ENCODE measurements at regions of chr6 and their contacts with region 1.

Region 1: GRCh38 chr6:16770701-16771569 is 9.7 kb upstream of the ATXN1 start:
- DNase-seq: peak; percentile 65 to 90 (median 73)
- ATAC-seq: peak; percentile 79
- H3K4me3 ChIP-seq: no peak overlapping the region
- H3K4me3 Mint-ChIP-seq: no peak overlapping the region
- H3K27ac ChIP-seq: no peak overlapping the region
- H3K27ac Mint-ChIP-seq: peak overlapping the region; percentile 40
- H3K4me1 ChIP-seq: peaks cover 20% of the 10 kb centered on the region
- H3K4me1 Mint-ChIP-seq: peaks cover 45% of the 10 kb centered on the region
- H3K27me3 ChIP-seq: no peaks in the 10 kb centered on the region
- H3K27me3 Mint-ChIP-seq: no peaks in the 10 kb centered on the region
- CTCF ChIP-seq: peak; percentile 96

Region 2: GRCh38 chr6:16741112-16742016 is 29.6 kb before region 1 on chr6:
- CTCF ChIA-PET with region 1: interaction called, 7 read pairs
- POLR2A ChIA-PET with region 1: no interaction called
- intact Hi-C with region 1: loop called (anchors 5 kb)
- DNase-seq: peak in 2 of 14 experiments; percentile 35 to 47
- ATAC-seq: peak; percentile 54
- H3K4me3 ChIP-seq: no peak overlapping the region
- H3K4me3 Mint-ChIP-seq: no peak overlapping the region
- H3K27ac ChIP-seq: no peak overlapping the region
- H3K27ac Mint-ChIP-seq: peak overlapping the region; percentile 2
- H3K4me1 ChIP-seq: peaks cover 12% of the 10 kb centered on the region
- H3K4me1 Mint-ChIP-seq: peaks cover 83% of the 10 kb centered on the region
- H3K27me3 ChIP-seq: no peaks in the 10 kb centered on the region
- H3K27me3 Mint-ChIP-seq: no peaks in the 10 kb centered on the region
- CTCF ChIP-seq: no peak

Measured in CD4-positive, alpha-beta T cell (primary cell).